SK-N-SH (cell line): ENCODE measurements at regions of chr7 and their contacts with region 1.

Region 1: GRCh38 chr7:111855161-111855856 is 293.0 kb upstream of the IMMP2L start:
- DNase-seq: peak; percentile 61
- H3K4me3 ChIP-seq: no peak overlapping the region; a peak in 1 of 4 replicates
- H3K27ac ChIP-seq: peak overlapping the region in 1 of 2 experiments; percentile 11; a peak in 1 of 4 replicates
- H3K4me1 ChIP-seq: peaks cover 0 to 11% of the 10 kb centered on the region in 2 experiments; a peak in 2 of 4 replicates
- H3K27me3 ChIP-seq: no peaks in the 10 kb centered on the region
- CTCF ChIP-seq: peak; percentile 86
- EP300 ChIP-seq: no peak
- RAD21 ChIP-seq: peak; percentile 85

Region 2: DNA sequence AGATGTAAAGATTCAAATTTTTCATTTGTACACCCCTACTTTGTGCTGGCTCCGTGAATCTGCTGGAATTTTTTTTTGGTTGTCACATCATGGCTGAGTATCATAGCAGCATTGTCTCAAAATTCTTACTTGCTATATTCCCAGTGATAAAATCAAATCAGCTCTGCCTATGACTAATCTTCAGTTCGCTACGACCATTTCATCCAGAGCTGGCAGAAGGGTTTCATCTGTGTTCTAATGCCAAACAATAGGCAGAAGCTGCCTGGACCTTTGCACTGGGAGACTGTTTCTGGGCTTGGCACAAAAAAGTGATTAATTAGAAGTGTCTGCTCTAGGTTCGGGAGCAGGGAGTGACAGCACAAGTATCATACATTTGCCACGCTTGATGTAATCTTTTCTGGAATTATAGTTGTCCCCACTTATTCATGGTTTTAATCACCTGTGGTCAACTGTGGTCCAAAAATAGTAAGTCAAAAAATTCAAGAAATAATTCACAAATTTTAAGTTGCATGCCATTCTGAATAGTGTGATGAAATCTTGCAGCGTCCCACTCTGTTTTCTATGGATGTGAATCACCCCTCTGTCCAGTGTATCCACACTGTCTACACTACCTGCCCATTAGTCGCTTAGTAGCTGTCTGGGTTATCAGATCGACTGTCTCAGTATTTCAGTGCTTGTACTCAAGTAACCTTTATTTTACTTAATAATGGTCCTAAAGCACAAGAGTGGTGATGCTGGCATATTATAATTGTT is 172.5 kb before region 1 on chr7:
- CTCF ChIA-PET with region 1: no interaction called
- POLR2A ChIA-PET with region 1: no interaction called
- DNase-seq: peak; percentile 13
- H3K4me3 ChIP-seq: 0 out of 4 replicates have a peak overlapping the region, but pooled peaks of 1 of the 2 experiments have one; percentile 7
- H3K27ac ChIP-seq: peak overlapping the region in 1 of 2 experiments; percentile 46; a peak in 2 of 4 replicates
- H3K4me1 ChIP-seq: peaks cover 8 to 19% of the 10 kb centered on the region in 2 experiments
- H3K27me3 ChIP-seq: no peaks in the 10 kb centered on the region
- CTCF ChIP-seq: no peak
- EP300 ChIP-seq: peak in 1 of 2 experiments; percentile 79; a peak in 2 of 4 replicates
- RAD21 ChIP-seq: no peak

Region 3: GRCh38 chr7:111752022-111752582 is 103.2 kb before region 1 on chr7:
- CTCF ChIA-PET with region 1: interaction called, 129 read pairs
- POLR2A ChIA-PET with region 1: no interaction called
- DNase-seq: peak; percentile 72
- H3K4me3 ChIP-seq: peak overlapping the region in 1 of 2 experiments; percentile 28; a peak in 1 of 4 replicates
- H3K27ac ChIP-seq: no peak overlapping the region
- H3K4me1 ChIP-seq: peaks cover 0 to 10% of the 10 kb centered on the region in 2 experiments; a peak in 2 of 4 replicates
- H3K27me3 ChIP-seq: no peaks in the 10 kb centered on the region
- CTCF ChIP-seq: peak; percentile 100
- EP300 ChIP-seq: no peak
- RAD21 ChIP-seq: peak; percentile 78

Region 4: DNA sequence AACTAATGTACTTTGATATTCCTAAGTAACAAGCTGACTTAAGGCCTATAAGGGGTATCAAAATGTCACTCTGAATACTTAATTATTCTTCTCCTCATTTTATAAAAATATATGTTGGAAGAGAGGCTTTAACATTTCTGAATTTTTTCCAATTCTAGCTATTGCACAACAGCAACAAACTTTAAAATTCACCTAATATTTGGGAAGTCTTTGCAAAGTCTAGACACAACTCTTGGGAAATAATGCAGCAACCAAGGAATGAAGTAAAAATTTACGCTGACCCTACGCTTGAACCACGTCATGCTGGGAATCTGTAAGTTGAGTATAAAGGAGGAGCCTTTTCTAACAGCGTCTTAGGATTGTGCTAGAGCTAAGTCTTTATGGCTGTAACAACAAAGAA is 49.1 kb before region 1 on chr7:
- CTCF ChIA-PET with region 1: interaction called, 18 read pairs
- POLR2A ChIA-PET with region 1: no interaction called
- DNase-seq: no peak
- H3K4me3 ChIP-seq: no peak overlapping the region
- H3K27ac ChIP-seq: no peak overlapping the region
- H3K4me1 ChIP-seq: no peaks in the 10 kb centered on the region; a peak in 1 of 4 replicates
- H3K27me3 ChIP-seq: no peaks in the 10 kb centered on the region
- CTCF ChIP-seq: no peak
- EP300 ChIP-seq: no peak
- RAD21 ChIP-seq: no peak

Region 5: DNA sequence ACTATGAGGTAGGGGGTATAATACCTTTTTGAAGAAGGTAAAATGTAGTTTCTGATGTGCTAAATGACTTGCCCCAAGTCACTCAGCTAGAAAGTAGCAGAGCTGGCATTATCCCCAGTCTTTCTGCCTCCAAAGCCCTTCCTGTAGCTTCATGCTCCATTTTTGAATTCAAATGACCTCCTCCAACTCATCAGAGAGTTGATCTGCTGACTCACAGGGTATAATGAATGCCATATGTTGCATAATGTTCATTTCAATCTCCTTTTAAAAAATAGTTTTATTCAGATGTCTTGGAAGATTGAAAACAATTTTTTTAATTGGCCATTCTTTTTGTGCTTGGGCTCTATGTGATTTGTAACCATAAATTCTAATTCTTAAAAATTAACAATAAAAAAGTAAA is 20.2 kb before region 1 on chr7:
- CTCF ChIA-PET with region 1: interaction called, 70 read pairs
- POLR2A ChIA-PET with region 1: no interaction called
- DNase-seq: peak; percentile 53
- H3K4me3 ChIP-seq: no peak overlapping the region; a peak in 1 of 4 replicates
- H3K27ac ChIP-seq: peak overlapping the region; percentile 90 to 93
- H3K4me1 ChIP-seq: peaks cover 22 to 29% of the 10 kb centered on the region in 2 experiments
- H3K27me3 ChIP-seq: no peaks in the 10 kb centered on the region
- CTCF ChIP-seq: no peak
- EP300 ChIP-seq: peak; percentile 78 to 91; a peak in 3 of 4 replicates
- RAD21 ChIP-seq: no peak

Region 6: DNA sequence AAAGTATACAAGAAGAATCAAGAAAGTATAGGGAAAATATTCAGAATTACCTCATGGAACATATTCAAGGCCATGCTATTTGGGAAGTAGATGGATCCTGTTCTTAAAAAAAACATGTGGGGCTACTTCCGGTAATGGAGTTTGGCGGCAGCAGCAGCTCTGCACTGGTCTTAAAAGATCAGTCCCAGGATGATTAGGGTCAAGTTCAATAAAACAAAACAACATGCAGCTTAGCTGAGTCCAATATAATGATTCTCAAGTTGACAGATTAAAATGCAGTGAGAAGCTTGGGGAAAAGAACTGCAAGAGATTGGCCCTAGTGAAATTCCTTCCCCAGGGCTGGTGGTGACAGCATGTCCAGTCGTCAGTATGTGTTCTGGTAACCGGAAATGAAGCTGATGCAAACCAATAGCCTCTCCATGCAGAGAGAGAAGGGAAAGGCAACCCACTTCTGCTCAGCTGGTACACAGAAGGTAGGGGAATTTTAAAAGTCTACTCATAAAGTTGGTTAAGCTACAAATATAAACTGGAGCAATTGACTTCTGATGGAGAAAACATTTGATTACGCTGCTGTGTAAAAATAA is 12.1 kb after region 1 on chr7:
- CTCF ChIA-PET with region 1: interaction called, 120 read pairs
- POLR2A ChIA-PET with region 1: no interaction called
- DNase-seq: no peak
- H3K4me3 ChIP-seq: no peak overlapping the region
- H3K27ac ChIP-seq: no peak overlapping the region
- H3K4me1 ChIP-seq: peaks cover 0 to 5% of the 10 kb centered on the region in 2 experiments; a peak in 2 of 4 replicates
- H3K27me3 ChIP-seq: no peaks in the 10 kb centered on the region
- CTCF ChIP-seq: no peak
- EP300 ChIP-seq: peak in 1 of 2 experiments; percentile 12; a peak in 1 of 4 replicates
- RAD21 ChIP-seq: no peak

Region 7: DNA sequence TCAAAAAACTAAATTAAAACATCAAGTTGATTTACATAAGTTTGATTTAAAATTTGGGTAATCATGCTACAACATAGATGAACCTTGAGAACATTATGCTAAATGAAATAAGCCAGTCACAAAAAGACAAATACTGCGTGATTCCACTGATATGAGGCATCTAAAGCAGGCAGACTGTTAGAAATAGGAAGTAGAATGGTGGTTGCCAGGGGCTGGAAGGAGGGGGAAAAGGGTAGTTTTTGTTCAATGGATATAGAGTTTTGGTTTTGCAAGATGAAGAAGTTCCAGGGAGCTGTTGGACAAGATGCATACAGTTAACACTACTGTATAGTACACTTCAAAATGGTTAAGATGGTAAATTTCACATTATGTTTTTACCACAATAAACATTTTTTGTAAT is 550.0 kb after region 1 on chr7:
- CTCF ChIA-PET with region 1: interaction called, 16 read pairs
- POLR2A ChIA-PET with region 1: no interaction called
- DNase-seq: no peak
- H3K4me3 ChIP-seq: no peak overlapping the region
- H3K27ac ChIP-seq: no peak overlapping the region
- H3K4me1 ChIP-seq: no peaks in the 10 kb centered on the region; a peak in 1 of 4 replicates
- H3K27me3 ChIP-seq: no peaks in the 10 kb centered on the region
- CTCF ChIP-seq: no peak
- EP300 ChIP-seq: no peak
- RAD21 ChIP-seq: no peak

Region 8: GRCh38 chr7:112437043-112437442 is 581.7 kb after region 1 on chr7:
- CTCF ChIA-PET with region 1: no interaction called
- POLR2A ChIA-PET with region 1: no interaction called
- DNase-seq: no peak
- H3K4me3 ChIP-seq: no peak overlapping the region
- H3K27ac ChIP-seq: peak overlapping the region in 1 of 2 experiments; percentile 98; a peak in 2 of 4 replicates
- H3K4me1 ChIP-seq: peaks cover 9 to 22% of the 10 kb centered on the region in 2 experiments
- H3K27me3 ChIP-seq: no peaks in the 10 kb centered on the region
- CTCF ChIP-seq: no peak
- EP300 ChIP-seq: peak in 1 of 2 experiments; percentile 21; a peak in 1 of 4 replicates
- RAD21 ChIP-seq: no peak